CD8-positive, alpha-beta memory T cell (primary cell): ENCODE measurements at regions of chr4 and their contacts with region 1.

Region 1: DNA sequence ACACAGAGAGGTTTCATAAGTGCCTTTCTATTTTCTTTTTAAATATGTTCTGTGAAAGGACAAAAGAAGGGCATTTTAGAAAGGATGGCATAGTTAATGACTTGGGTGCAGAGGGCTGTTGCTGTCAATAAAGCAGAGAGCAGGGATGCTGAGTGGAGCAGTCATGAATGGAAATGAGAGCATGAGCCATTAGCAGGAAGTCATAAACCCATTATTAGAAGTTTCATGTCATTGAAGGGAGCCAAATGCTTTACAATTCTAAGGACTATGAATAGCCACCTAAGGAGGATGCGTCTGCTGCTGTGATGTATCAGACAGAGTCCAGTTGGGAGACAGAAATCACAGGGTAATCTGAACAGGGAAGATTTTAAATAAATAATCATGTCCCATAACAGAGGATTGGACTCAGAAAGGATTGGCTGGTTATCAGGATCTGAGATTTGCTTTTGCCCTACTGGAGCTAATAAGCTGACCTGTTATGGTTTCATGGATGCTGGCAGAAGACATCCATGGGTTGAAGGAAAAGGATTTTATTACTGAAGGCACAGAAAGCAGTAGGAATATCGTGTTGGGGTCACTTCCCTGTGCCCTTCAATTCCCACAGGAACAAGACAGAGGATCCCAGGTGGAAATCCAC is 47.5 kb upstream of the WDR19 start:
- DNase-seq: peak in 1 of 5 donors; percentile 3
- H3K4me3 ChIP-seq: no peak overlapping the region
- H3K4me3 Mint-ChIP-seq: no peak overlapping the region
- H3K27ac ChIP-seq: no peak overlapping the region
- H3K27ac Mint-ChIP-seq: peak overlapping the region in 3 of 8 donors; percentile 52 to 79 (median 61)
- H3K4me1 ChIP-seq: peaks cover 4% of the 10 kb centered on the region
- H3K4me1 Mint-ChIP-seq: peaks cover 4 to 11% (median 6%) of the 10 kb centered on the region in 3 donors
- H3K27me3 ChIP-seq: no peaks in the 10 kb centered on the region
- H3K27me3 Mint-ChIP-seq: peaks cover 0 to 2% of the 10 kb centered on the region in 2 donors

Region 2: GRCh38 chr4:38902695-38903094 is 232.1 kb before region 1 on chr4:
- CTCF ChIA-PET with region 1: interaction called, 104 read pairs
- POLR2A ChIA-PET with region 1: interaction called, 4 read pairs
- DNase-seq: peak in 2 of 5 donors; percentile 40 to 42
- H3K4me3 ChIP-seq: no peak overlapping the region
- H3K4me3 Mint-ChIP-seq: no peak overlapping the region
- H3K27ac ChIP-seq: no peak overlapping the region
- H3K27ac Mint-ChIP-seq: no peak overlapping the region
- H3K4me1 ChIP-seq: no peaks in the 10 kb centered on the region
- H3K4me1 Mint-ChIP-seq: no peaks in the 10 kb centered on the region
- H3K27me3 ChIP-seq: no peaks in the 10 kb centered on the region
- H3K27me3 Mint-ChIP-seq: peaks cover 2 to 15% of the 10 kb centered on the region in 2 donors

Region 3: GRCh38 chr4:38907696-38908270 is 227.0 kb before region 1 on chr4:
- CTCF ChIA-PET with region 1: interaction called, 104 read pairs
- POLR2A ChIA-PET with region 1: interaction called, 4 read pairs
- DNase-seq: no peak
- H3K4me3 ChIP-seq: no peak overlapping the region
- H3K4me3 Mint-ChIP-seq: no peak overlapping the region
- H3K27ac ChIP-seq: no peak overlapping the region
- H3K27ac Mint-ChIP-seq: no peak overlapping the region
- H3K4me1 ChIP-seq: no peaks in the 10 kb centered on the region
- H3K4me1 Mint-ChIP-seq: no peaks in the 10 kb centered on the region
- H3K27me3 ChIP-seq: no peaks in the 10 kb centered on the region
- H3K27me3 Mint-ChIP-seq: no peaks in the 10 kb centered on the region

Region 4: GRCh38 chr4:39169426-39170185 is 34.8 kb after region 1 on chr4:
- CTCF ChIA-PET with region 1: no interaction called
- POLR2A ChIA-PET with region 1: no interaction called
- DNase-seq: no peak
- H3K4me3 ChIP-seq: no peak overlapping the region
- H3K4me3 Mint-ChIP-seq: no peak overlapping the region
- H3K27ac ChIP-seq: no peak overlapping the region
- H3K27ac Mint-ChIP-seq: no peak overlapping the region
- H3K4me1 ChIP-seq: no peaks in the 10 kb centered on the region
- H3K4me1 Mint-ChIP-seq: peaks cover 0 to 6% (median 0%) of the 10 kb centered on the region in 3 donors
- H3K27me3 ChIP-seq: no peaks in the 10 kb centered on the region
- H3K27me3 Mint-ChIP-seq: peaks cover 3 to 4% of the 10 kb centered on the region in 2 donors

Region 5: DNA sequence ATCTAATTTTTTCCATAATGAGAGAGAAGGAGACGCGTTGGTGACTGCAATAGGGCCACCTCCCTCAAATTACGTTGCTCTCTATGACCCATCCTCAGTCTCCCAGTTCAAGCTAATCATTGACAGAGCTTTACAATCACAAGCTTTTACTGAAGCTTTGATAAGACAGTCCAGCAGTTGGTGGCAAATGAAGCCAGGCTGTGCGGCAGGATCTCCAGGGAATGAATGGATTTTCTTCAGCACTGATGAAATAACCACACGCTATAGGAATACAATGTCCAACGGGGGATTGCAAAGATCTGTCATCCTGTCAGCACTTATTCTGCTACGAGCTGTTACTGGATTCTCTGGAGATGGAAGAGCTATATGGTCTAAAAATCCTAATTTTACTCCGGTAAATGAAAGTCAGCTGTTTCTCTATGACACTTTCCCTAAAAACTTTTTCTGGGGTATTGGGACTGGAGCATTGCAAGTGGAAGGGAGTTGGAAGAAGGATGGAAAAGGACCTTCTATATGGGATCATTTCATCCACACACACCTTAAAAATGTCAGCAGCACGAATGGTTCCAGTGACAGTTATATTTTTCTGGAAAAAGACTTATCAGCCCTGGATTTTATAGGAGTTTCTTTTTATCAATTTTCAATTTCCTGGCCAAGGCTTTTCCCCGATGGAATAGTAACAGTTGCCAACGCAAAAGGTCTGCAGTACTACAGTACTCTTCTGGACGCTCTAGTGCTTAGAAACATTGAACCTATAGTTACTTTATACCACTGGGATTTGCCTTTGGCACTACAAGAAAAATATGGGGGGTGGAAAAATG is 272.2 kb after region 1 on chr4 and contains the start of gene KLB:
- CTCF ChIA-PET with region 1: no interaction called
- POLR2A ChIA-PET with region 1: no interaction called
- DNase-seq: no peak
- H3K4me3 ChIP-seq: no peak within 1 kb of the TSS
- H3K4me3 Mint-ChIP-seq: no peak within 1 kb of the TSS
- H3K27ac ChIP-seq: no peak within 1 kb of the TSS
- H3K27ac Mint-ChIP-seq: no peak within 1 kb of the TSS
- H3K4me1 ChIP-seq: no peaks in the 10 kb centered on the region
- H3K4me1 Mint-ChIP-seq: no peaks in the 10 kb centered on the region
- H3K27me3 ChIP-seq: no peaks in the 10 kb centered on the region
- H3K27me3 Mint-ChIP-seq: peaks cover 0 to 6% of the 10 kb centered on the region in 2 donors
- total RNA-seq, gene KLB: not detected